ENCODE measurements at regions of chr1 and their contacts with region 1.

Region 1: DNA sequence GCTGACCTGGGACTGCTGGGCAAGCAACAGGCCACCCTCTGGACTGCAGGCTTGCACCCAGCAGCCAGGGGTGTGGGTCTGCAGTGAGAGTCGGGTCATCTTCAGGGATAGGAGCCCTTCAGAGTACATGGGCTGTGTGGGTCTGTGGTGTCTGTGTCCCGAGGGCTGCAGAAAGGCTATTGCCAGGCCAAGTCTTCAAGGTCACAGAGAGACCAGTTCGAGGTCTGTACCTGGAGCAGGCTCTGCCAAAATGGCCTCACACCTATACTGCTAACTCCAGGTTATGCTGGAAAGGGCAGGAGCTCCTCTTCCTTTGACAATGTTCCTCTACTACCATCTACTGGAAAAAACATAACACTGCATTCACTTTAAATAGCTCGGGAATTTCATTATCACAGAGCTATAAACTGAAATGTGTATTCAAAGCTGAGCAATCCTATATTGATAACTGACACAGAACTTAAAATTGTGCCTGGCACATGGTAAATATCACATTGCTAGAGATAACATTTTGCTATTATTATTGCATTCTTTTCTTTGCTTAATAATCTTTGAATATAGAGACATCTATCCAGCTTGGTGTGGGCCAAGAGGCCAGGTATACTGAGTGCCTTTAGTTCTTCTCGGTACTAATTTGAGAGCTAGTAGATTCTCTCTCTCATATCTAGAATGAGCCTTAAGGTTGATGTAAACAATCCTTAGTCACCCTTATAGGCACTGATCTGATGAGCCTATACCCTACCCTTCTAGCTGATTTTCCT is 6.9 kb upstream of the DNAH14 start:
- DNase-seq: no peak
- ATAC-seq: peak; percentile 54 to 76 (median 70)
- H3K4me3 ChIP-seq: no peak overlapping the region
- H3K27ac ChIP-seq: no peak overlapping the region
- H3K4me1 ChIP-seq: no peaks in the 10 kb centered on the region
- H3K27me3 ChIP-seq: no peaks in the 10 kb centered on the region
- CTCF ChIP-seq: peak; percentile 70

Region 2: GRCh38 chr1:224644553-224645154 is 277.9 kb before region 1 on chr1:
- intact Hi-C with region 1: loop called in 1 of 2 experiments (anchors 10 kb)
- DNase-seq: no peak
- ATAC-seq: peak; percentile 55 to 86 (median 68)
- H3K4me3 ChIP-seq: no peak overlapping the region
- H3K27ac ChIP-seq: no peak overlapping the region
- H3K4me1 ChIP-seq: no peaks in the 10 kb centered on the region
- H3K27me3 ChIP-seq: no peaks in the 10 kb centered on the region
- CTCF ChIP-seq: peak; percentile 84

Region 3: GRCh38 chr1:225114354-225114990 is 191.9 kb after region 1 on chr1:
- intact Hi-C with region 1: no loop called
- DNase-seq: no peak
- ATAC-seq: no peak
- H3K4me3 ChIP-seq: no peak overlapping the region
- H3K27ac ChIP-seq: no peak overlapping the region
- H3K4me1 ChIP-seq: no peaks in the 10 kb centered on the region
- H3K27me3 ChIP-seq: no peaks in the 10 kb centered on the region
- CTCF ChIP-seq: no peak

Measured in psoas muscle (tissue), 8 donors.